ENCODE measurements at regions of chr17 and their contacts with region 1.

Region 1: DNA sequence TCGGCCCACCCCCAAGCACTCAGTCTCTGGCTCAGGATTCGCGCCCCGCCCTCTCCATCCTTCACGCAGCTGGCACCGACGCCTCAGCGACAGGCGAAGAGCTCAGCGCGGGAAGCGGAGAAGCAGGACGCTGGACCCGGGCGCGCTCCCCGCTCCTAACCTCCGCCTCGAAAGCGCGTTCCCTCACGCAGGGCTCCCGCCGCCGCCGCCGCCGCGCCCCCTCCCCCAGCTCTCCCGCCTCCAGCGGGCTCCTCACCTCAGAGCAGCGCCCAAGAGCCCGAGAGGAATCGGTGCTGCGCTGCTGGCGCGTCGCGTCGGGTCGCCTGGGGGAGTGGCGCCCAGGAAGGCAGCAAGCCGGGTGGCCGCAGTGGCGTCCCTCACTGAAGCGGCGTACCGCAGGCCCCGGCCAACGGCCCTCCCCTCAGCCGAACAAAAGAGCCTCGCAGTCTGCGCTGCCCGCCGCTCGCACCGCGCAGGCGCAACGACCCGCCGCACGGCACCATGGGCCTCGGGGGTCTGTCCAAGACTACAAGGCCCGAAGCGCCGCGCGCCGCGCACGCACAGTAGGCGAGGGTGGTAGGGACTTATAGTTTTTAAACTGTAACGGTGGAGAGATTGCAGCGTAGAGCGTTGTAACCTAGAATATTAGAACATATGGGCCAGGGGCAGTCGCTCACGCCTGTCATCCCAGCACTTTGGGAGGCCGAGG is at the start of gene CBX1:
- DNase-seq: peak; percentile 87 to 97 (median 92)
- ATAC-seq: peak; percentile 94
- H3K4me3 ChIP-seq: peak within 1 kb of the TSS; percentile 89
- H3K4me3 Mint-ChIP-seq: peak within 1 kb of the TSS; percentile 92
- H3K27ac ChIP-seq: peak within 1 kb of the TSS in 1 of 2 donors; percentile 50
- H3K27ac Mint-ChIP-seq: peak within 1 kb of the TSS; percentile 74
- H3K4me1 ChIP-seq: peaks cover 21% of the 10 kb centered on the region
- H3K4me1 Mint-ChIP-seq: peaks cover 48% of the 10 kb centered on the region
- H3K27me3 ChIP-seq: no peaks in the 10 kb centered on the region
- H3K27me3 Mint-ChIP-seq: no peaks in the 10 kb centered on the region
- CTCF ChIP-seq: no peak
- total RNA-seq, gene CBX1: 5.5 to 6.6 TPM

Region 2: GRCh38 chr17:48113201-48113676 is 12.1 kb after region 1 on chr17:
- CTCF ChIA-PET with region 1: interaction called, 4 read pairs
- POLR2A ChIA-PET with region 1: interaction called, 21 read pairs
- intact Hi-C with region 1: no loop called
- DNase-seq: peak; percentile 20 to 75 (median 52)
- ATAC-seq: peak; percentile 95
- H3K4me3 ChIP-seq: no peak overlapping the region
- H3K4me3 Mint-ChIP-seq: peak overlapping the region; percentile 83
- H3K27ac ChIP-seq: peak overlapping the region; percentile 52 to 59
- H3K27ac Mint-ChIP-seq: peak overlapping the region; percentile 81
- H3K4me1 ChIP-seq: peaks cover 41% of the 10 kb centered on the region
- H3K4me1 Mint-ChIP-seq: peaks cover 39% of the 10 kb centered on the region
- H3K27me3 ChIP-seq: no peaks in the 10 kb centered on the region
- H3K27me3 Mint-ChIP-seq: no peaks in the 10 kb centered on the region
- CTCF ChIP-seq: no peak